Activated T-helper 1 cell treated with anti-CD3 and anti-CD28 coated beads, Interleukin-12 subunit alpha, Interleukin-12 subunit beta, Interleukin-2, Interleukin-4 antibody, amounts not matched to agents 30 ng/mL and 10 ng/mL and 1 ng/mL, durations not matched to agents 14 hours and 24 hours and 36 hours (primary cell): ENCODE measurements at regions of chr7 and their contacts with region 1.

Region 1: DNA sequence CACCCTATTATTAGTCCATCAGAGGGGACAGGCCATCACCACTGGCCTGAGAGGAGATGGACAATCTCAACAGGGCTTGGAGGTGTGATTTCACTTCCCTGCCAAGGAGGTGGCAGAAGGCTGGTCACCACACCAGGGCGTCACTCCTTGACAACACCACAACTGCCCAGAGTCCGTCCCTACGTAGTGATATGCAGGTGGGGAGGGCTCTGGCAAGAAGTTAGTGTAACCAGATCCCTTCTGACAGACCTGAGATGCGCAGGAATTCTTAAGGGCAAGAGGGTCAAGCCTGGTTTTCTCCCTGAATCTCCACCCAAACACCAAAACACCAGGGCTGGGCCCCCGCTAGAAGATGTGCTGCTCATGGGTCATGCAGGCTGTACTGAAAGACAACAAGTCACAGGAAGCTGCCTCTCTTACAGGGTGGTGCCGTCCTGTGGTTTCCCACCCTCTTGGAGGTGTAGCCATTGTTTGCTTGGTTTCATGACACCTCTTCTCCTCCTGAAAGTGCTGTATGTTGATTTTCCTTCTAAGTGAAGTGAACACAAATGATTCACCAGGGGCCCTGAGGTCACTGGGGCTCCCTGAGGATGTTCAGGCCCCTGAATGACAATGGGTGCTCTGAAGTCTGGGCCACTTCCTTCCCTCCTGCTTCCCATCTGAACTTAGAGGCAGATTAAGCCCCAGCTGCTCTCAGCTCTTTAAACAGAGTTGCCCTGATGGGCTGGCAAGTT is 27.1 kb downstream of the ATXN7L1 start:
- DNase-seq: peak; percentile 70
- H3K4me3 Mint-ChIP-seq: peak overlapping the region; percentile 60
- H3K27ac Mint-ChIP-seq: peak overlapping the region; percentile 80
- H3K4me1 Mint-ChIP-seq: peaks cover 59% of the 10 kb centered on the region
- H3K27me3 Mint-ChIP-seq: peaks cover under 1% of the 10 kb centered on the region

Region 2: DNA sequence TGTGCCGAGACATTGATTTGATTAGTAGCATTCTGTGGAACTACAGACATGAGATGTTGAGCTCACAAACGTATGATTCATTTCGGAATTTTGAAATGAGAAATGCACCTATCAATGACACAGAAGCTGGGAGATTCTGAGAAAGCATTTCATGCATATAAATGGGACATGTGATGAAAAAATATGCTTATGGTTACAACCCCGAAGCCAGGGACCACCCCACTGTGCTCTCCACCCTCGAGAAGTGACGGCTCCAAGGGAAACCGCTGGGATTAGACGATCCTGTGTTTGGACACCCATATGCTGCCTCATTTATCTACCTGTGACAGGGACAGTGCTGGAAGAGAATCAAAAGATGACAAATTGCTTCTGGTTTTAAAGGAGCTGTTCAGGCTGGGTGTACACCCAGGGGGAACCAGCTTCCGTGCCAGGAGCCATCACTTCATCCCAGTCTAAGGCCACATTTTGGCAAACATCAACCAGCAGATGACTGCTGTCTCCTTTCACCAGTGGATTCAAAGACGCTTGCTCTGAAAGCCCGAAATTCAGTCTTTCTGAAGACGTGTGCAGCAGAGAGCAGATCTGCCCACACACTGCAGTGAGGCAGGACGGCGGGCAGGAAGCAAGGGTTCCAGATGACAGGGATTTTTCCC is 82.7 kb before region 1 on chr7:
- intact Hi-C with region 1: loop called (anchors 1 kb)
- DNase-seq: no peak
- H3K4me3 Mint-ChIP-seq: no peak overlapping the region
- H3K27ac Mint-ChIP-seq: no peak overlapping the region
- H3K4me1 Mint-ChIP-seq: peaks cover 24% of the 10 kb centered on the region
- H3K27me3 Mint-ChIP-seq: peaks cover 22% of the 10 kb centered on the region

Region 3: DNA sequence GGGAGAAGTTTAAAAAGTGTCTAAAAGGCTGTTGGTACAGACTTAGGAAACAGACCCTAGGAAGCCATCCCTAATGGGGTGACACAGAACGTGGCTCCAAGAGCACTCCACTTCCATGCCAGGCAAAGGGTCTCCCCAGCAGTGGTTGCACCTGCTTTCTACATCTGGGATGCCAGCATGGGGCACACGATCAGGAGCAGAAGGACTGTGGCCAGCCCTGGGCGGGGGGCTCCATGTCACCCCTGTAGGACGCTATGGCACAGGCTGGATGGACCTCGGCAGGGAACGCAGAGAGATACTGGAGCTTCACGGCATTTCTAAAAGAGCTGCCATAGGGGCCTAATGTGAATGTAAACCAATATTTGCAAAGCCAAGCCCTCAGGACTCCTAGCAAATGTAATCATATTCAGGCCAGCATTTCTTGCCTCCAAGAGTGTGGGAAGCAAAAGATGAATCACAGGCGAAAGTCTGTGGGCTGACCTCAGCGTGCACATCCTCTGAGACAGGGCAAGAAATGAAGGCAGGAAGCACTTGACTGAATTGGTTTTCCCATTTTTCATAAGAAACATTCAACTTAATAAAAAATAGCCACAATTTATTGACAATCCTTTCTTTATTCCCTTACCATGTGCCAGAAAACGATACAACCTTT is 66.8 kb before region 1 on chr7:
- intact Hi-C with region 1: loop called (anchors 1 kb)
- DNase-seq: no peak
- H3K4me3 Mint-ChIP-seq: no peak overlapping the region
- H3K27ac Mint-ChIP-seq: no peak overlapping the region
- H3K4me1 Mint-ChIP-seq: peaks cover 11% of the 10 kb centered on the region
- H3K27me3 Mint-ChIP-seq: peaks cover 47% of the 10 kb centered on the region

Region 4: DNA sequence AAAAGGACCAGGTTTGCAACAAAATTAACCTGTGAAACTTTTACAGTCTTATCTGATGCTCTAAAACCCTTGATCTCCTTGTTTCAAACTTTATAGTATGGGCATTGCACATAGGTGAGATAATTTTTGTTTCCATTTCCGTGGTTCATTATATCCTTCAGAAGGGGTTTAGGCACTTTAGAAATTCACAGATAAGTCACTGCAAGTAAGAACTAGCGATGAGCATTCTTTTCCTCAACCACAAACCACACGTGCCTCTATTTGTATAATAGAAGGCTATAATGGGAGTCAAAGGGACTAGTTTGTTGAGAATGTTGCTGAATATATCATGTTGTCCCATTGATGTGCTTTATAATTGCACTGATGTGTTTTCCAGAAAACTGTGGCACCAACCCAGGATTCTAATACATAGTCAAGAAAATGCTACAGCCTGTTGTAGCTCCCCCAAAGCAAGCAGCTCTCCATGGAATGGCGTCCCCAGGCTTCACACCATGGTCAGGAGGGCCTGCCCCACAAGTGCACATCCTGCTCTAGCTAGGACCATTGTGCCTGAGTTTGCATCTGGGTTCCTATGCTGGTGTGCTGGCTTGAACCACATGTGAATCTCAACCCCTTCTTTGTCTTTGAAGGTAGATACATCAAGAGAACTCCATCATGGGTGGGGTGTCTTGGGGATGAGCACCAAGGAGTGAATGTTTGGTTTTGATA is 41.2 kb after region 1 on chr7:
- intact Hi-C with region 1: loop called (anchors 5 kb)
- DNase-seq: no peak
- H3K4me3 Mint-ChIP-seq: no peak overlapping the region
- H3K27ac Mint-ChIP-seq: no peak overlapping the region
- H3K4me1 Mint-ChIP-seq: peaks cover 10% of the 10 kb centered on the region
- H3K27me3 Mint-ChIP-seq: peaks cover 9% of the 10 kb centered on the region

Region 5: GRCh38 chr7:105924945-105925344 is 75.7 kb after region 1 on chr7:
- intact Hi-C with region 1: loop called (anchors 1 kb)
- DNase-seq: no peak
- H3K4me3 Mint-ChIP-seq: no peak overlapping the region
- H3K27ac Mint-ChIP-seq: peak overlapping the region; percentile 56
- H3K4me1 Mint-ChIP-seq: peaks cover 18% of the 10 kb centered on the region
- H3K27me3 Mint-ChIP-seq: peaks cover 12% of the 10 kb centered on the region

Region 6: GRCh38 chr7:106009403-106010226 is 160.3 kb after region 1 on chr7:
- intact Hi-C with region 1: loop called (anchors 1 kb)
- DNase-seq: peak; percentile 72
- H3K4me3 Mint-ChIP-seq: no peak overlapping the region
- H3K27ac Mint-ChIP-seq: peak overlapping the region; percentile 32
- H3K4me1 Mint-ChIP-seq: peaks cover 15% of the 10 kb centered on the region
- H3K27me3 Mint-ChIP-seq: peaks cover 33% of the 10 kb centered on the region

Region 7: DNA sequence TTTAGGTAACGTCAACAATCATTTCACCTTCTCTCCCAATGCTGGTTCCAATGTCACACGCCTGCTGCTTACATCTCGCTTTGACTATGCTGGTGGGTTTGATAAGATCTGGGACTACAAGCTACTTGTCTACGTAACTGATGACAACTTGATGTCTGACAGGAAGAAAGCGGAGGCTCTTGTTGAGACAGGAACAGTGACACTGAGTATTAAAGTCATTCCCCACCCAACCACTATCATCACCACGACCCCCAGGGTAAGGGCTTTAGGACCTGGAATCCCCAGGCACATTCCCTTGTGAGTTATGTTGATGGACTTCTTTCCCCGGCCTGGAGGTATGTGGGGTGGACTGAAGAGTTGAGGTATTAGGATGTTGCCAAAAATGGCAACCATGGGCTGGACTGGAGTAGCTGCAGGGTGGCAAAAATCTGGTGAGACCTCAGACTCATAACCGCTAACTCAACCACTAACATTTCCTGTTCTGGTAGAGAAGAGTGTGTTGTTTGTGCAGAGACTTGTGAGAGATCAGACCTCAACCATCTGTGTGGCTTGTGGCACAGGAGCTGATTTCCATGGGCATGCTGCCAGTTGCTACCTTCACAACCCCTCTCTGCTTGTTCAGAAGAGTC is 173.0 kb after region 1 on chr7:
- intact Hi-C with region 1: loop called (anchors 1 kb)
- DNase-seq: peak; percentile 56
- H3K4me3 Mint-ChIP-seq: peak overlapping the region; percentile 37
- H3K27ac Mint-ChIP-seq: peak overlapping the region; percentile 77
- H3K4me1 Mint-ChIP-seq: peaks cover 49% of the 10 kb centered on the region
- H3K27me3 Mint-ChIP-seq: peaks cover 13% of the 10 kb centered on the region